CD8-positive, alpha-beta T cell (primary cell): ENCODE measurements at regions of chr2 and their contacts with region 1.

Region 1: DNA sequence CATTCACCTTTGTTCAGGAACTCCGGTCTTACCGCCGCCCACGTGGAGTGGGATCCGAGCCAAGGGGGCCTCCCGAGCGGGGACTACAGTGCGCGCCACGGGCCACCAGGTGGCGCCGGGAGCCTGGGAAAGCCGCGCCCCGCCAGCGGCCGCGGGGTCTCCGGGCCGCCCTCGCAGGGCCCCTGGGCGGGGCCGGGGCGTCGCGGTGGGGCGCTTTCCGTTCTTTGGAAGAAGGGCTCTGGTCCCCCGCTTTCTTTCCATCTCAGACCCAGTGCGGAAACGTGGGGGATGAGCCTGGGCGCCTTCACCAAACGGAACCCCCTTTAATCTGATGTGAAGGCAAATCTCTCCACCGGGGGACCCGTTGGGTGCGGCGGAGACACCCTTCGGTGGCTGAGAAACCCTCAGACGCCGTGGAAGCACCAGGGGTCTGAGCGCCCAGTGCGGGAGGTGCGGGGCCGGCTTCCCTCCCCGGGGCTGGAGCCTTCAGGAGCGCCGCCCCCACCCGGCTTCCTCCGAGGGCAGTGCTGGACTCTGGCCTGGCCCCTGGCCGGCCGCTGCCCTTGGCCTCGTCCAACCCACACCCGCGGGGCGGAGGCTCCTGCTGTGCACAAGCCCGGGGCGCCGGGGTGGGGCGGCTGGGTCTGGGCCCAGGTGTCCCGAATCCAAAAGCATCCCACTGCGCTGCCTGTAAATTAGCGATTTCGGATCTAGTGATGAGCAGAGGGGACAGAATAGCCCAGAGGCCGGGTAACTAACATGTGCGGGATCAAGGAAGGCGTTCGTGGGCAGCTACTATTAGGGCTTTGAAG is 44.6 kb downstream of the GORASP2 start:
- DNase-seq: peak; percentile 72 to 94 (median 87)
- ATAC-seq: peak; percentile 97
- H3K4me3 ChIP-seq: peak overlapping the region; percentile 75 to 88
- H3K4me3 Mint-ChIP-seq: peak overlapping the region; percentile 85
- H3K27ac ChIP-seq: peak overlapping the region; percentile 36 to 59
- H3K27ac Mint-ChIP-seq: peak overlapping the region; percentile 83
- H3K4me1 ChIP-seq: peaks cover 11% of the 10 kb centered on the region
- H3K4me1 Mint-ChIP-seq: peaks cover 7% of the 10 kb centered on the region
- H3K27me3 ChIP-seq: no peaks in the 10 kb centered on the region
- H3K27me3 Mint-ChIP-seq: no peaks in the 10 kb centered on the region
- CTCF ChIP-seq: peak; percentile 74

Region 2: DNA sequence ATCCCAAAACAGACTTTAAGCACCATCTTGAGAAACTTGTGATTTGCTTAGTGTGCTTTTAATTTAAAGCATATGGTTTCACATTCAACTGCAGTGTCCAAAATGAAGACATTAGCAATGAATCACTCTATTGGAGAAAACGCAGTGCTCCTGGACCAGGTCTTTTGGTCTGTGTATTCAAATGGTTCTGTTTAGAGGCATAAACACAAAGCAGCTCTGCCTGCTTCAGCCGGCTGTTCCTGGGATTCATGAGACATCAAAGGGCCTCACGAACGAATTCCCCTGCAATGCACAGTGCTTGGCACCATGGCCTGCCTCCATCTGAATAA is 375.7 kb before region 1 on chr2:
- CTCF ChIA-PET with region 1: no interaction called
- POLR2A ChIA-PET with region 1: no interaction called
- intact Hi-C with region 1: no loop called
- DNase-seq: no peak
- ATAC-seq: no peak
- H3K4me3 ChIP-seq: no peak overlapping the region
- H3K4me3 Mint-ChIP-seq: no peak overlapping the region
- H3K27ac ChIP-seq: no peak overlapping the region
- H3K27ac Mint-ChIP-seq: no peak overlapping the region
- H3K4me1 ChIP-seq: no peaks in the 10 kb centered on the region
- H3K4me1 Mint-ChIP-seq: no peaks in the 10 kb centered on the region
- H3K27me3 ChIP-seq: no peaks in the 10 kb centered on the region
- H3K27me3 Mint-ChIP-seq: peaks cover 8% of the 10 kb centered on the region
- CTCF ChIP-seq: no peak

Region 3: GRCh38 chr2:171086352-171087290 is 112.9 kb after region 1 on chr2:
- CTCF ChIA-PET with region 1: interaction called, 13 read pairs
- POLR2A ChIA-PET with region 1: interaction called, 4 read pairs
- intact Hi-C with region 1: loop called (anchors 1 kb)
- DNase-seq: peak; percentile 27 to 78 (median 57)
- ATAC-seq: peak; percentile 72
- H3K4me3 ChIP-seq: peak overlapping the region; percentile 4 to 39
- H3K4me3 Mint-ChIP-seq: peak overlapping the region; percentile 80
- H3K27ac ChIP-seq: peak overlapping the region; percentile 7 to 39
- H3K27ac Mint-ChIP-seq: peak overlapping the region; percentile 95
- H3K4me1 ChIP-seq: peaks cover 57% of the 10 kb centered on the region
- H3K4me1 Mint-ChIP-seq: peaks cover 66% of the 10 kb centered on the region
- H3K27me3 ChIP-seq: no peaks in the 10 kb centered on the region
- H3K27me3 Mint-ChIP-seq: no peaks in the 10 kb centered on the region
- CTCF ChIP-seq: peak; percentile 80

Region 4: GRCh38 chr2:171160119-171160955 is 186.6 kb after region 1 on chr2 and contains the start of gene TLK1:
- CTCF ChIA-PET with region 1: interaction called, 49 read pairs
- POLR2A ChIA-PET with region 1: interaction called, 9 read pairs
- intact Hi-C with region 1: loop called (anchors 1 kb)
- DNase-seq: peak; percentile 55 to 88 (median 78)
- ATAC-seq: peak; percentile 56
- H3K4me3 ChIP-seq: peak within 1 kb of the TSS; percentile 75 to 92
- H3K4me3 Mint-ChIP-seq: peak within 1 kb of the TSS; percentile 90
- H3K27ac ChIP-seq: peak within 1 kb of the TSS; percentile 74 to 89
- H3K27ac Mint-ChIP-seq: peak within 1 kb of the TSS; percentile 94
- H3K4me1 ChIP-seq: peaks cover 44% of the 10 kb centered on the region
- H3K4me1 Mint-ChIP-seq: peaks cover 60% of the 10 kb centered on the region
- H3K27me3 ChIP-seq: no peaks in the 10 kb centered on the region
- H3K27me3 Mint-ChIP-seq: no peaks in the 10 kb centered on the region
- CTCF ChIP-seq: no peak
- total RNA-seq, gene TLK1: 95.7 to 107 TPM

Region 5: DNA sequence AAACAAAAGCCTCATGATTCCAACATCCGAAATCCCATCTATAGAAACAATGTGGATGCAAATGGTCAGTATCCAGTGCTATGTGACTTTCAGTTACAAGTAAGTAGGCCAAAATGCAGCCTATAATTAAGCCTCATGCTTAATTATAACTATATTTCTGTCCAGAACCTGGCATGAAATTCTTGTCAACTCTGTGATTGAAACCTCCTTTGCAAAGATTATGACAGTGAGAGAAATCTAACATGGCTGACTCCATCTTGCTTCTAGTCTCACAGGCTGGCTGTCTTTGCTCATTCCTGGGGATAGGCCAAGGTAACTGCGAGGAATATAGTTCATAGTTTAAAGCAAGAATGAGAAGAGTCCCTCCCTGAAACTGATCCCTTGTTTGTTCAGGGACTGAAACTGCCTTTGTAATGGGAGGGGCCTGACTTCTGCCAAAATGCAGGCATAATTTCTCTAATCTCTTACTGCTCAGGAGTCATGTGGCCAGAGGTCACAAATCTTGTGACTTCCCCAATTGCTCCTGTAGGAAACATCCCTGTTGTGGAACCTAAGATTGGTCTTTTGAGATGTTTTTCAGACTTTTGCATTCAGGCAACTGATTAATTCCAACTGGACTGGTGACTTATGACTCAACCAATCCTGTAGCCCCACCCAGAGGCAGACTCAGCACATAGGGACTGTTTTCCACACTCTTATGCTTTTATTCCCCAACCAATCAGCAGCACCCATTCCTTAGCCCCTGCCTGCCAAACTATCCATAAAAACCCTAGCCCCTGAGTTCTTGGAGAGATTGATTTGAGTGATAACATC is 271.5 kb after region 1 on chr2:
- CTCF ChIA-PET with region 1: interaction called, 4 read pairs
- POLR2A ChIA-PET with region 1: no interaction called
- intact Hi-C with region 1: loop called in 1 of 2 experiments (anchors 1 kb)
- DNase-seq: peak in 2 of 9 experiments; percentile 18 to 23
- ATAC-seq: no peak
- H3K4me3 ChIP-seq: no peak overlapping the region
- H3K4me3 Mint-ChIP-seq: no peak overlapping the region
- H3K27ac ChIP-seq: no peak overlapping the region
- H3K27ac Mint-ChIP-seq: no peak overlapping the region
- H3K4me1 ChIP-seq: peaks cover 26% of the 10 kb centered on the region
- H3K4me1 Mint-ChIP-seq: peaks cover 35% of the 10 kb centered on the region
- H3K27me3 ChIP-seq: no peaks in the 10 kb centered on the region
- H3K27me3 Mint-ChIP-seq: no peaks in the 10 kb centered on the region
- CTCF ChIP-seq: no peak

Region 6: GRCh38 chr2:171320208-171320621 is 346.5 kb after region 1 on chr2:
- CTCF ChIA-PET with region 1: no interaction called
- POLR2A ChIA-PET with region 1: no interaction called
- intact Hi-C with region 1: loop called in 1 of 2 experiments (anchors 10 kb)
- DNase-seq: no peak
- ATAC-seq: no peak
- H3K4me3 ChIP-seq: no peak overlapping the region
- H3K4me3 Mint-ChIP-seq: no peak overlapping the region
- H3K27ac ChIP-seq: no peak overlapping the region
- H3K27ac Mint-ChIP-seq: no peak overlapping the region
- H3K4me1 ChIP-seq: peaks cover 3% of the 10 kb centered on the region
- H3K4me1 Mint-ChIP-seq: peaks cover 30% of the 10 kb centered on the region
- H3K27me3 ChIP-seq: no peaks in the 10 kb centered on the region
- H3K27me3 Mint-ChIP-seq: no peaks in the 10 kb centered on the region
- CTCF ChIP-seq: no peak

Region 7: DNA sequence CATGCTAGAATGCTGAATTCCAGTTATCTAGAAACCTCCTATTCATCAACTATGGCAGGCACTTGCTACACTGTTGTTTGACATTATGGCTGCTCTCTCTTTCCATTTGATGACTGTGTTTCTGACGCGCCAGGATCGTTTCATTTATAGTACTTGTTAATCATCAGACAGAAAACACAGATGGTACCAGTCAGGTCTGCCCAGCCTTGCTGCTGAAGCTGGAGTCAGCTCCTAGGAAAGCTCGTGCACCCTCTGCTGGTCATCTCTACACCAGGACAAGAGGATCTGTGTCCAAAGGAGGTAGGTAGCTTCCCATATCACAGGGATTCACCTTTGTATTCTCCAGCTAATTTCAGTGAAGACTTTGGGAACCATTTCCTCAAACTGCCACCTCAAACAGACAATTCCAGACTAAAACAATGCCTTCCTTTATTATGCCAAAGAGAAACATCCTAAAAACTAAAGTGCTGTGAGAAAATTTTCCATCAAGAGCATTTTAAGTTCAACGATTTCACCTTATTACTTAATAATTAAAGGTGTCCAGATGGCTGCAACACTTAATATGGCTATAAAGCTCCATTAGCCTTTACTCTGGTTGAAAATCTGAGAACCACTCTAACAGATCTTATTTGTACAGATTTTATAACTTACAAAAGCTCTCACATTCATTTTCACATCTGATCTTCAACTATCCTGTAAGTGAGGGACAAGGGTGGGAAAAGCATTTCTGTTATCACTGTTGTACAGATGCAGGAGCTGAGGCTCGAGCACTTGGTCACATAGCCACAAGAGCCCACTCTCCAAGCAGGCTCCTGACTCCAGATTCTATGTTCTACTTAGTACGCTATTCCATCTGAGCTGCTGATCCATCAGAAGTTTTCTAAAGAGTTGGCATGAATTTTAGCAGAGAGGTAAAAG is 442.6 kb after region 1 on chr2:
- CTCF ChIA-PET with region 1: interaction called, 33 read pairs
- POLR2A ChIA-PET with region 1: interaction called, 5 read pairs
- intact Hi-C with region 1: loop called (anchors 1 kb)
- DNase-seq: peak; percentile 44 to 85 (median 79)
- ATAC-seq: peak; percentile 98
- H3K4me3 ChIP-seq: no peak overlapping the region
- H3K4me3 Mint-ChIP-seq: no peak overlapping the region
- H3K27ac ChIP-seq: no peak overlapping the region
- H3K27ac Mint-ChIP-seq: peak overlapping the region; percentile 1
- H3K4me1 ChIP-seq: no peaks in the 10 kb centered on the region
- H3K4me1 Mint-ChIP-seq: peaks cover 10% of the 10 kb centered on the region
- H3K27me3 ChIP-seq: no peaks in the 10 kb centered on the region
- H3K27me3 Mint-ChIP-seq: no peaks in the 10 kb centered on the region
- CTCF ChIP-seq: peak; percentile 65

Region 8: GRCh38 chr2:171615069-171615468 is 641.4 kb after region 1 on chr2:
- CTCF ChIA-PET with region 1: no interaction called
- POLR2A ChIA-PET with region 1: no interaction called
- intact Hi-C with region 1: no loop called
- DNase-seq: no peak
- ATAC-seq: no peak
- H3K4me3 ChIP-seq: no peak overlapping the region
- H3K4me3 Mint-ChIP-seq: no peak overlapping the region
- H3K27ac ChIP-seq: no peak overlapping the region
- H3K27ac Mint-ChIP-seq: no peak overlapping the region
- H3K4me1 ChIP-seq: no peaks in the 10 kb centered on the region
- H3K4me1 Mint-ChIP-seq: no peaks in the 10 kb centered on the region
- H3K27me3 ChIP-seq: no peaks in the 10 kb centered on the region
- H3K27me3 Mint-ChIP-seq: peaks cover 3% of the 10 kb centered on the region
- CTCF ChIP-seq: no peak